ENCODE measurements at regions of chr7 and their contacts with region 1.

Region 1: DNA sequence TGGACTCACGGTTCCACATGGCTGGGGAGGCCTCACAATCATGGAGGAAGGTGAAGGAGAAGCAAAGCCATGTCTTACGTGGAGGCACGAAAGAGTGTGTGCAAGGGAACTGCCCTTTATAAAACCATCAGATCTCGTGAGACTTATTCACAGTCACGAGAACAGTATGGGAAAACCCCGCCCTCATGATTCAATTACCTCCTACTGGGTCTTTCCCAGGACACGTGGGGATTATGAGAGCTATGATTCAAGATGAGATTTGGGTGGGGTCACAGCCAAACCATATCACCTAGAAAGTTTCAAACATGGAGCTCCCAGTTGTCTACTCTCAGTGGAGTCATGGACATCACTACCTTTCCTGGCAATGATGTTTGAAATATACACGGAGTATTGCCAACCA is 49.6 kb downstream of the CYCS start:
- DNase-seq: no peak
- H3K4me3 ChIP-seq: no peak overlapping the region
- H3K27ac ChIP-seq: no peak overlapping the region
- H3K4me1 ChIP-seq: peaks cover under 1% of the 10 kb centered on the region
- H3K27me3 ChIP-seq: no peaks in the 10 kb centered on the region
- CTCF ChIP-seq: no peak
- POLR2A ChIP-seq: no peak

Region 2: GRCh38 chr7:24819916-24820689 is 255.4 kb before region 1 on chr7:
- intact Hi-C with region 1: loop called (anchors 5 kb)
- DNase-seq: peak in 1 of 2 donors; percentile 93
- H3K4me3 ChIP-seq: no peak overlapping the region
- H3K27ac ChIP-seq: peak overlapping the region; percentile 86
- H3K4me1 ChIP-seq: peaks cover 30% of the 10 kb centered on the region
- H3K27me3 ChIP-seq: no peaks in the 10 kb centered on the region
- CTCF ChIP-seq: peak; percentile 77 to 84 (median 84)
- POLR2A ChIP-seq: no peak

Region 3: GRCh38 chr7:24948739-24949138 is 126.7 kb before region 1 on chr7:
- intact Hi-C with region 1: no loop called
- DNase-seq: no peak
- H3K4me3 ChIP-seq: no peak overlapping the region
- H3K27ac ChIP-seq: no peak overlapping the region
- H3K4me1 ChIP-seq: peaks cover 17% of the 10 kb centered on the region
- H3K27me3 ChIP-seq: no peaks in the 10 kb centered on the region
- CTCF ChIP-seq: no peak
- POLR2A ChIP-seq: no peak

Region 4: DNA sequence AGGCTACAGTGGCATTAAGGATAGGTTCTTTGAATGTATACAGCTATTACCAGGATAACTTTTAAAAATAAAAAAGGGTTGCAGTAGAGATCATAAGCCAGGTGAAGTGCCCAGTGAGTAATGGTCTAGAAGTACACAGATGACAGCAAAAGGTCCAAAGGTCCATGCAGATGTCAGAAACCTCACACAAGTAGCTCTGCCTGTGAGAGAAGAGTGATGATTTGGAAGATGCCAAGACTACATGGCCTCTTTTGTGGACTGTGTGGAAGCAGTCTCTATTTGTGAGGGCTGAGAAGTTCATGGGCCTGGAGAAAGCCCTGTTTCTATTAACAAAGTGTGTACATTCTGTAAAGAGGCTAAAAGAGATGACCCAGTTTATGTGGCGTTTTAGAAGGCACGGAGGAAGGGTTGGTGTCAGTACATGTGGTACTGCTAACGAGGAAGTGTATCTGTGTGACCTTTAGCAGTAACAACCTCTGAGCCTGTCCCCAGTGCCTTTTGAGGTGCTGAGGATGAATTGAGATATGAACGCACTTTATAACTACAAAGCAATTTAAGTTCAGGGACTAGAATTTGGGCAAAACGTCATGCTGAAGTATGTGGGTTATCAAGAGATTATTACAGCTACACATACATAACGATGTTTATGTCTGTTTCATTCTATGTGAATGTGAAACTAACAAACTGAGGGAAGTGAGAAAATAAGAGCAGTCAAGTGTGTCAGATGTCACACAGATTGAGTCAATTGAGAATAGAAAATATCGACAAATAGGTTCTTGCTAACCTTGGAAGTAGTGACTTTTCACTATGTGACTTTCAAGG is 42.0 kb after region 1 on chr7:
- intact Hi-C with region 1: no loop called
- DNase-seq: peak in 1 of 2 donors; percentile 49
- H3K4me3 ChIP-seq: no peak overlapping the region
- H3K27ac ChIP-seq: no peak overlapping the region
- H3K4me1 ChIP-seq: no peaks in the 10 kb centered on the region
- H3K27me3 ChIP-seq: no peaks in the 10 kb centered on the region
- CTCF ChIP-seq: no peak
- POLR2A ChIP-seq: no peak